PC-3 (cell line): ENCODE measurements at regions of chr11 and their contacts with region 1.

Region 1: DNA sequence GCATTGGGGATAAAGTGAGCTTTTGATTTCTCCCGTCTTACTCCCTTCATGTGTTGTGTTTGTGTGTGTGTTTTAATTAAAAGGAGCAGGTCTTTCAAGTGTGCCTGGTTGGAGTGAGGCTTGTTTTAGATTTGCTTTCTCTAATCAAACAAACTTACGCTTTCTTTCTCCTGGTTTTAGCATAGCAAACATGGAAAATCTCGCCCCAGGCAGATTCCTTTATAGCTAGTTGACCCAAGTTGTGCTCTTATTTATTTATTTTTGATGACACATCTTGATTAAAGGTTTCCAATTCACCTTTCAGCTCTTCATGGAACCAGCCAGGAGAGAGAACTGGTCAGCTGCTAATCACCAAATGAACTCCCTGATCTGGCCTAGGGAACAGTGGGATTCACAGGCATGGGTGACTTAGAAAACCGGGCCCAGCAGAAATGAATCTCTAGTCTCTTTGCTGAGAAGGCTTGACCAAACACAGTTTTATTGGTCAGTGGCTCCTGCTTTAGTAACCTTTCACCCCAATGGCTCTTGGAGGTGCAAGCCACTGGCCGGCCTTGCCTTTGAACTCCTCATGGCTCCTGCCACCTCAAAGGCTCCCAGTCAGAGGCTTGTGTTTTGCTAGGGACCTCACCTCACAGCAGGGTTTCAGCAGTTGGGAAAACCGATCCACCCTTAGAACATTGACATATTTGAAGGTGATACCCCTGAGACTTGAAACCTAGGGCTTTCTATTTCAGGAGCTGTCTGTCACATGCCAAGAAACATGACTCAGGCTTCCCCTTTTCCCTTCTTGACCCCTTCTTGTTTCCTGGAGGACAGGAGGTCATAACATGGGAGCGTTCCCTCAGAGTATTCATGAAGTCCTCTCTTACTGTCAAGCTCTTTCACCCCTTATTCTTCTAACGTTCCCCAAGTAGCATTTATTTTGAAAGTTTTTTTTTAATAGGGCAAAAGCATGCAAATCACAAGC is 48.7 kb downstream of the EXT2 start:
- DNase-seq: peak; percentile 95
- ATAC-seq: peak; percentile 60
- H3K4me3 ChIP-seq: peak overlapping the region; percentile 45; the same call in 1 of the 2 replicates
- H3K27ac ChIP-seq: peak overlapping the region; percentile 87
- H3K4me1 ChIP-seq: peaks cover 54% of the 10 kb centered on the region
- H3K27me3 ChIP-seq: no peaks in the 10 kb centered on the region
- CTCF ChIP-seq: no peak

Region 2: DNA sequence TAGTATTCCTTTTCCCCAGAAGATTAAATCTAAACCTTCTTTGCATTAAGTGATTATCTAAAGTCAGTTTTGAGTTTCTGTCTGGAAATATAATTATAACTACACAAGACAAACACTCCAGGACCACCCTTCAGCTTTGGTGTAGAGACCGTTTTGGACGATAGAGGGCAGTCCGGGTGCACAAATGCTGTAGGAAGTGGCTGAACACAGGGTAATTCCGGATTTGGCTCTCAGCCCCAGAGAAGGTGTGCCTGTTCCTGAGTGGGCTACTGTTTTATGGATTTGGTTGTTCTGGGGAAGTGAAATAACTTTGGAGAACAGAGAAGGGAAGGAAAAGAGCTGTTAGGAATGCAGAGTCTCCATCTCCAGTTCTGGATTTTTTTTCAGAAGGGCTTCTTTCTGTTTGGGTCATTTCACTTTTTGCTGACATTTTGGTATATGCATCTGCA is 34.0 kb before region 1 on chr11:
- CTCF ChIA-PET with region 1: no interaction called
- POLR2A ChIA-PET with region 1: interaction called, 6 read pairs
- intact Hi-C with region 1: loop called (anchors 2 kb)
- DNase-seq: peak; percentile 66
- ATAC-seq: peak; percentile 86
- H3K4me3 ChIP-seq: no peak overlapping the region
- H3K27ac ChIP-seq: no peak overlapping the region
- H3K4me1 ChIP-seq: no peaks in the 10 kb centered on the region
- H3K27me3 ChIP-seq: no peaks in the 10 kb centered on the region
- CTCF ChIP-seq: peak; percentile 90

Region 3: GRCh38 chr11:44229098-44229497 is 84.9 kb after region 1 on chr11:
- CTCF ChIA-PET with region 1: no interaction called
- POLR2A ChIA-PET with region 1: no interaction called
- intact Hi-C with region 1: loop called (anchors 2 kb)
- DNase-seq: peak; percentile 37
- ATAC-seq: peak; percentile 90
- H3K4me3 ChIP-seq: no peak overlapping the region
- H3K27ac ChIP-seq: no peak overlapping the region
- H3K4me1 ChIP-seq: peaks cover 12% of the 10 kb centered on the region; the same call in 1 of the 2 replicates
- H3K27me3 ChIP-seq: no peaks in the 10 kb centered on the region
- CTCF ChIP-seq: no peak

Region 4: GRCh38 chr11:44326615-44327475 is 182.6 kb after region 1 on chr11:
- CTCF ChIA-PET with region 1: no interaction called
- POLR2A ChIA-PET with region 1: no interaction called
- intact Hi-C with region 1: loop called (anchors 5 kb)
- DNase-seq: no peak
- ATAC-seq: peak; percentile 43; the same call in 1 of the 2 replicates
- H3K4me3 ChIP-seq: no peak overlapping the region
- H3K27ac ChIP-seq: no peak overlapping the region
- H3K4me1 ChIP-seq: no peaks in the 10 kb centered on the region
- H3K27me3 ChIP-seq: peaks cover 88% of the 10 kb centered on the region
- CTCF ChIP-seq: no peak